KBM-7 (cell line): ENCODE measurements at regions of chr6 and their contacts with region 1.

Region 1: DNA sequence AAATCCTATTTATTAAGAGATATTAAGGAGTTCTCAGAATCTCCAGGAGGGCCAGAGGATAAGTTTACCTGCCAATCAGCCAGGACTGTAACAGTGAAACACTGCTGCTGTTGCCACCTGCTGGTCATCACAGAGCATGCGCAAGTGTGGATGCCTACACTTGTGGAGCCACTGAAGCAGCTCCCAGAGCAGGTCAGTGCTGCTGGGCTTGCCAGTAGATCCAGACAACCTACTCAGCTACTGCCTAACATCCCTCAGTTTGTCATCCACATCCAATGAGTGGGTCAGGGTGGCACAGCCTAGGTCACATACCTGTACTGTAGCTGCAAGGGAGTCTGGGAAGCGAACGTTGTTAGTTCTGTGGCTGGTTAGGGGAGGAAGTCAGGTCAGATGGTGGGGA is 18.3 kb upstream of the NHSL1 start:
- DNase-seq: peak; percentile 52

Region 2: GRCh38 chr6:138115877-138116660 is 401.6 kb before region 1 on chr6:
- in situ Hi-C with region 1: loop called (anchors 25 kb)
- DNase-seq: peak; percentile 79